Activated T-helper 1 cell treated with anti-CD3 and anti-CD28 coated beads, Interleukin-12 subunit alpha, Interleukin-12 subunit beta, Interleukin-2, Interleukin-4 antibody, amounts not matched to agents 30 ng/mL and 10 ng/mL and 1 ng/mL, durations not matched to agents 14 hours and 24 hours and 36 hours (primary cell): ENCODE measurements at regions of chr14 and their contacts with region 1.

Region 1: GRCh38 chr14:54730156-54730961 is 163.4 kb downstream of the SAMD4A start:
- DNase-seq: peak; percentile 48
- H3K4me3 Mint-ChIP-seq: peak overlapping the region; percentile 28
- H3K27ac Mint-ChIP-seq: peak overlapping the region; percentile 56
- H3K4me1 Mint-ChIP-seq: peaks cover 36% of the 10 kb centered on the region
- H3K27me3 Mint-ChIP-seq: peaks cover 40% of the 10 kb centered on the region

Region 2: DNA sequence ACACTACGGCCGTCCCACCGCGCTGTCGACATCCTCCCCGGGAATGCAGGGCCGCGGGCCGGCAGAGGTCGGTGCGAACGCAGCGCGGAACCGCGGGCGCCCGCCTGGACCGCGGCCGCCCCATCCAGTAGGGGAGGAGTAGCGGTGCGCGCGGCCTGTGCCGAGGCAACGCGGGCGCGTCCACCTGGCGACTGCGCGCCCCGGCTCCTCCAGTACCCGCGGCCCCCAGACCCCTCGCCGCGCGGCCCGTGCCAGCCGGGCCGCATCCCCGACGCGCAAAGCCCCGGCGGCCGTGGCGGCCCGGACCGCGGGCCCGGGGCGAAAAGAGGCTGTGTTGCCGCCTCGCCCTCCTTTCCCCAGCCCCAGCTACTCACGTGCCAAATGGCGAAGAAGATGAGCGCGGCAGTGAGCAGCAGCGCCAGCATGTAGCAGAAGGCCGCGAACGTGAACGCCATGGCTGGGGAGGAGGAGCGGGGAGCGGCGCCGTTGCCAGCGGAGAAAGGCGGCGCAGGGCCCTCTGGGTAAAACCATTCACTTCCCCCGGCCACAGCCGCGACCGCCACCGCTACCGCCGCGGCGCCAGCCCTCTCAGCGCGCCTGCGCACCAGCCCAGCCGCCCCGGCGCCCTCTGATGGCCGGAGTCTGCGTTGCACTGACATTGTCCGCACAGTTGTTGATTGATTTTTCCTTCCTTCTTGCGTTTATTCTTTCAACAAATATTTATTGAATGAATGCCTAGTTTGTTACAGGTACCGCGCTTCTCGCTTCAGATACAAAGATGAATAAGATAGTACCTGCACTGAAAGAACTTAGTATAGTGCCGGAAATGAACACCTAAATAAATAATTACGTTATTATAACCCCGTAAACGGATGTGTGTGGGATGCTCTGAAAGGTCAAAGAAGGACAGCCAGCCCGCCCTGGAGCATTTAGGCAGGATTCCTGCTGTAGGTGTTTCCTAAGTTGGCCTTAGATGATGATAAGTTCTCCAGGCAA is 289.2 kb before region 1 on chr14 and contains the start of gene CNIH1:
- intact Hi-C with region 1: loop called (anchors 2 kb)
- DNase-seq: peak; percentile 91
- H3K4me3 Mint-ChIP-seq: peak within 1 kb of the TSS; percentile 89
- H3K27ac Mint-ChIP-seq: peak within 1 kb of the TSS; percentile 93
- H3K4me1 Mint-ChIP-seq: peaks cover 45% of the 10 kb centered on the region
- H3K27me3 Mint-ChIP-seq: peaks cover 2% of the 10 kb centered on the region
- total RNA-seq, gene CNIH1: 105 and 109 TPM in 2 replicates

Region 3: GRCh38 chr14:54509546-54510501 is 220.5 kb before region 1 on chr14 and contains the start of gene CGRRF1:
- intact Hi-C with region 1: loop called (anchors 1 kb)
- DNase-seq: peak; percentile 94
- H3K4me3 Mint-ChIP-seq: peak within 1 kb of the TSS; percentile 95
- H3K27ac Mint-ChIP-seq: peak within 1 kb of the TSS; percentile 83
- H3K4me1 Mint-ChIP-seq: peaks cover 40% of the 10 kb centered on the region
- H3K27me3 Mint-ChIP-seq: peaks cover 8% of the 10 kb centered on the region
- total RNA-seq, gene CGRRF1: 8.5 and 13.2 TPM in 2 replicates

Region 4: DNA sequence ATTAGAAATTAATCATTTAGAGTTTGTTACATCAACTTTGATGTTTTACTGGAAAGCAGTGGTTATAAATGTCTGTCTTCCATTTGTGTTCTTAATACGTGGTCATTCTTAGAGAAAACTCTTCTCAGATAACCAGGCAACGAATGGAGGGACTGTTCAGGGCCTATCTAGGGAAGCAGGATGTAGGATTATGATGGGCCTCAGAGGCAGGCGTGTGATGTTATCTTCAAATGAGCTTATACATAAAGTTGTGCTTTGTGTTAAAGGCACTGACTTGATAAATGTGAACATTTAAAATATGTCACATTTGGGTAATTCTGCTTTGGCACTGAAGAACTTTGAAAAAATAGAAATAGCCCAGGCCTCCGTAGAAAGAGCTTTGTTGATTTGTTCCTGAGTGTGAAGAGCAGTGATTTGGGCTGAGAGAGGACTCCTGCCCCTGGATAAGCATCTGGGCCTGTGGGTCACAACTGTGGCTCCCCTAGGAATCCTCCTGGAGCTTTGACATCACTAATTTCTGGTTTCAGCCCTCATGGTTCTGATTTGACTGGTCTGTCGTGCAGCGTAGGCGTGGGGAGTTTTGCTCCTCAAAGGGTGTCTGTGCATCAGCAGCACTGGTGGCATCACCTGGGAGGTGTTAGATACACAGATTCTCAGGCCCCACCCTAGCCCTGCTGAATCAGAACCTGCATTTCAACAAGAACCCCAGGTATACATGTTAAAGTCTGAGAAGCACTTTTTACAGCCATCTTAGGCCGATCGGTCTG is 108.0 kb before region 1 on chr14:
- intact Hi-C with region 1: loop called (anchors 1 kb)
- DNase-seq: no peak
- H3K4me3 Mint-ChIP-seq: no peak overlapping the region
- H3K27ac Mint-ChIP-seq: no peak overlapping the region
- H3K4me1 Mint-ChIP-seq: peaks cover 19% of the 10 kb centered on the region
- H3K27me3 Mint-ChIP-seq: peaks cover 3% of the 10 kb centered on the region

Region 5: GRCh38 chr14:54669721-54670561 is 60.4 kb before region 1 on chr14:
- intact Hi-C with region 1: loop called (anchors 1 kb)
- DNase-seq: peak; percentile 5
- H3K4me3 Mint-ChIP-seq: no peak overlapping the region
- H3K27ac Mint-ChIP-seq: peak overlapping the region; percentile 11
- H3K4me1 Mint-ChIP-seq: peaks cover 40% of the 10 kb centered on the region
- H3K27me3 Mint-ChIP-seq: peaks cover 59% of the 10 kb centered on the region

Region 6: DNA sequence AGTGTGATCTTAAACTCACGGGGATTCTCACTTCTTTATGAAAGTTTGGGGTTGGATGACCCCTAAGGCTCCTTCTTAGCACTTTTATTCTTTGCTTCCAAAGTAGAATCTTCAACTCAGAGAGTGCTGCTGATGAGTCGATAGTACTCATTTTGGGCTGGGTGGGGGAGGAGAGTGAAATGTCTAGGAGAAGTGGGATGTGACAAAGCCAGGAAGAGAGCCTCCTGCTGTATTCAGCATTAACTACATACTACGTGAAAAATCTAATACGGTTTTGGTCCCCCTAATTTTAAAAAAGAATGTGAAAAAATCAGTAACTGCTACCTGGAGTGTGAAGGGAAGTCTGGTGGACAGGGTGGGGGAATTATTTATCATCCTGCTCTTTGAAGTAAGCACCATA is 15.1 kb before region 1 on chr14:
- intact Hi-C with region 1: loop called (anchors 2 kb)
- DNase-seq: no peak
- H3K4me3 Mint-ChIP-seq: no peak overlapping the region
- H3K27ac Mint-ChIP-seq: no peak overlapping the region
- H3K4me1 Mint-ChIP-seq: no peaks in the 10 kb centered on the region
- H3K27me3 Mint-ChIP-seq: peaks cover 24% of the 10 kb centered on the region

Region 7: DNA sequence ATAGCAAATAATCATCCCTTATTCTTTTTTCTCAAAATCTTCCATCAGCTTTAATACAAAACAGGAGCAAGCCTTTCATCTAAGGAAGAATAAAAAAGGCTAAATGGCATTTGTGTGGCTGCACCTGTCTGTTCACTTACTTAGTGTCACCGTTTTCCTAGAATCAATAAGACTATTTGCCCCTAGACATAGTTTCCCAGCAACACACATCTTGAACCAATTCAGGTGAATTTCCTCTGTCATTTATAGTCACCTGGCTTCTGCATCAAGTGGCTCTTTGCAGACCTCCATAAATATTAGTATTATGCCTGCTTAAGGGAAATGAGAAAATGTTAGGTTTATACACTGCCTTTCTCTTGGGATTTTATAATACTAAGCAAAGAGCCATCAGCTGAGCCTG is 189.7 kb after region 1 on chr14:
- intact Hi-C with region 1: no loop called
- DNase-seq: no peak
- H3K4me3 Mint-ChIP-seq: no peak overlapping the region
- H3K27ac Mint-ChIP-seq: no peak overlapping the region
- H3K4me1 Mint-ChIP-seq: peaks cover 8% of the 10 kb centered on the region
- H3K27me3 Mint-ChIP-seq: peaks cover 2% of the 10 kb centered on the region